Breast epithelium (tissue), 4 donors: ENCODE measurements at regions of chr13 and their contacts with region 1.

Region 1: DNA sequence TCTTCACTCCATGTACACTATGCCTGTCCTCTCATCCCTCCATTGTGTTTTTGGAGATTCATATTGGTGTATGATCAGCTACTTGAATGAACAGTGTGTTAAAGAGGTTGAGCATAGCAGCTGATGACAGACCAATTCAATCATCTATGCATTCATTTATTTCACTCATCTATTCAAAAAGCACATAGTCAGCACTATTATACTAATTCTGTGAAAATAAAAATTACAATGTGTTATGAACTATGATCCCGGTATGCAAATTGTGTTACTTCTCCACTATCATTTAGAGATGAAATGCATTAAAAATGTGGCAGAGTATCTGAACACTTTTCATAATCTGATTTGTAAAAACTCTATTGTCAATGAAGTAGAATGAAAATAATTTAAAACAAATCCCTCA is 5.9 kb downstream of the TRPC4 start:
- DNase-seq: no peak
- H3K4me3 ChIP-seq: no peak overlapping the region
- H3K27ac ChIP-seq: no peak overlapping the region
- H3K4me1 ChIP-seq: no peaks in the 10 kb centered on the region
- H3K27me3 ChIP-seq: no peaks in the 10 kb centered on the region
- CTCF ChIP-seq: no peak
- POLR2A ChIP-seq: no peak

Region 2: GRCh38 chr13:37679043-37679442 is 184.7 kb before region 1 on chr13:
- intact Hi-C with region 1: loop called (anchors 5 kb)
- DNase-seq: no peak
- H3K4me3 ChIP-seq: no peak overlapping the region
- H3K27ac ChIP-seq: no peak overlapping the region
- H3K4me1 ChIP-seq: no peaks in the 10 kb centered on the region
- H3K27me3 ChIP-seq: no peaks in the 10 kb centered on the region
- CTCF ChIP-seq: no peak
- POLR2A ChIP-seq: no peak

Region 3: DNA sequence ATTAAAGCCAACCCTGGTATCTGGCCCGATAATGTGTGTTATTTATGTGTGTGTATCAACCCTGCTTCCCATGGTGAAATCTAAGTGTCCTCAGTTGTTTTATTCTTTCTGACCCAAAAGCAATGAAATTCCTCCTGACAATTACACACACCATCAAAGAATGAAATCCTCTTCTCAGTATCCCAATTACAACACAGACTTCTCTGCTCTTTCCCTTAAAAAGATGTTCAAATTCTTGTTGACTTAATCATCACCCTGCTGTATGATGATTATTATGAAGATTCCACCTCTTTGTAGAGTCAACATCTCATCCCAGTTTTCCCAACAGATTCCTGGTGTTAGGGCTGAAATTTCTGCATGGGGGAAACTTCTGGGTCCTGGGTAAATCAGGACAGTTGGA is 14.8 kb after region 1 on chr13:
- intact Hi-C with region 1: no loop called
- DNase-seq: no peak
- H3K4me3 ChIP-seq: no peak overlapping the region
- H3K27ac ChIP-seq: no peak overlapping the region
- H3K4me1 ChIP-seq: no peaks in the 10 kb centered on the region
- H3K27me3 ChIP-seq: no peaks in the 10 kb centered on the region
- CTCF ChIP-seq: no peak
- POLR2A ChIP-seq: no peak